Activated T-helper 2 cell treated with anti-CD3 and anti-CD28 coated beads, Interferon-gamma antibody, Interleukin-2, Interleukin-4, amounts not matched to agents 10 μg/mL and 5 μg/mL and 100 μg/mL, durations not matched to agents 14 hours and 24 hours and 36 hours (primary cell): ENCODE measurements at regions of chr10 and their contacts with region 1.

Region 1: DNA sequence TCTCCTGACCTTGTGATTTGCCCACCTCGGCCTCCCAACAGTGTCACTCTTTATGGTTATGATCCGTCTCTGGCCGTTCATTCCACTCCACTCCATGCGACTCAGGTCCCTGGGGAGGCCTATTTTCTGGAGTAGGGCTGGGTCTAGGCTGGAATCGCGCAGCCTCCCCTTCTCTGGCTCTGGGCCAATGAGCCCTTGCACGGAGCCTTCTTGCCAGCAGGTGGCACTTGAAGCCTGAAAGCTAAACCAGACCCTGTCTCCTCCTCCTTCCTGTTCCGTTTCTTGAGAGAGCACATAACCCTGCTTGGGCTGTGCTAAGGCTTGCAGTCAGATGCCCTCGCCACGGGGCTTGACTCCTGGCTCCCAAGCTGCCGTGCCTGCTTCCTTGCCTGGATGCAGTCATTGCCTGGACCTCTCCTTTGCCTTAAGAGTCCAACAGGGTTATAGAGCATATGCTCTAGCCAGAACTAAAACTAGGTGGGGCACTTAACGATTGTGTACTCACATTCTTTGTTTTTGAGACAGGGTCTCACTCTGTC is 9.6 kb upstream of the DNAJB12 start:
- DNase-seq: peak; percentile 79
- H3K4me3 Mint-ChIP-seq: no peak overlapping the region
- H3K27ac Mint-ChIP-seq: peak overlapping the region; percentile 40
- H3K4me1 Mint-ChIP-seq: peaks cover 19% of the 10 kb centered on the region
- H3K27me3 Mint-ChIP-seq: peaks cover 2% of the 10 kb centered on the region

Region 2: DNA sequence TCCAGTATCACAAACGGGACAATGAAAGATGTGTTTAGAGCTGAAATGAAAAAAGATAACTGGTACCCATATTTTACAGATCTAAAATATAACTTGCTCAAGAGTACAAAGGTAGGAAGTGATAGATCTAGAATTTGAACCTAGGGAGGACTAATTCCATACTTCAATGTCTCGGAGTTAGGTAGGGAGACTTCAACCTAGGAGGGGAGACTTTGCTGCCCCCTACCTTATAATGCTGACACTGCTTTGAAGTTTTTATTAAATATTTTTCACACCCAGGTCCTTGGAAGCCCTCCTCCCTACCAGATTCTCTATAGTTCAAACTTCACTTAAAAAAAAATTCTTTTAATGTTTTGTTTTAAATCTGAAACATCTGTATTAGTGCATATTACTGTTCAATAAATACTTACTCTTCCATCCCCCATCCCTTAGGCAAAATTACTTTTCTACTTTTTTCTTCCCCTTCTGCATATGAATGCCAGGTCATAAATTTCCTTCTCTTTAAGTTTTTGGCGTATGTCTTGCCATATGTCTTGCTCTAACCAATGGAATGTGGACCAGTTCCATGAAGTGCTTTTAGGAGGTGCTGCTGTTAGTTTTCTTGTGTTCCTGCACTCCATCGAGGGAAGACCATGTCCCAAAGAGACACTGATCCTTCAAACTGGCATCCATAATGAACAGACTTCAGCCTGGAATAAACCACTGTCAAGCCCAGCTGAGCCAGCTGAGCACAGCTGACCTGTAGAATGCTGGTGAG is 203.8 kb after region 1 on chr10:
- intact Hi-C with region 1: loop called (anchors 5 kb)
- DNase-seq: no peak
- H3K4me3 Mint-ChIP-seq: no peak overlapping the region
- H3K27ac Mint-ChIP-seq: no peak overlapping the region
- H3K4me1 Mint-ChIP-seq: peaks cover 16% of the 10 kb centered on the region
- H3K27me3 Mint-ChIP-seq: no peaks in the 10 kb centered on the region

Region 3: GRCh38 chr10:72692057-72692910 is 328.0 kb after region 1 on chr10 and contains the start of gene MCU:
- intact Hi-C with region 1: loop called (anchors 5 kb)
- DNase-seq: peak; percentile 88
- H3K4me3 Mint-ChIP-seq: peak within 1 kb of the TSS; percentile 84
- H3K27ac Mint-ChIP-seq: peak within 1 kb of the TSS; percentile 1
- H3K4me1 Mint-ChIP-seq: peaks cover 27% of the 10 kb centered on the region
- H3K27me3 Mint-ChIP-seq: peaks cover 5% of the 10 kb centered on the region
- total RNA-seq, gene MCU: 11.6 and 13.2 TPM in 2 replicates

Region 4: GRCh38 chr10:72834183-72834825 is 470.0 kb after region 1 on chr10:
- intact Hi-C with region 1: loop called (anchors 1 kb)
- DNase-seq: peak; percentile 12
- H3K4me3 Mint-ChIP-seq: no peak overlapping the region
- H3K27ac Mint-ChIP-seq: no peak overlapping the region
- H3K4me1 Mint-ChIP-seq: peaks cover 5% of the 10 kb centered on the region
- H3K27me3 Mint-ChIP-seq: no peaks in the 10 kb centered on the region

Region 5: DNA sequence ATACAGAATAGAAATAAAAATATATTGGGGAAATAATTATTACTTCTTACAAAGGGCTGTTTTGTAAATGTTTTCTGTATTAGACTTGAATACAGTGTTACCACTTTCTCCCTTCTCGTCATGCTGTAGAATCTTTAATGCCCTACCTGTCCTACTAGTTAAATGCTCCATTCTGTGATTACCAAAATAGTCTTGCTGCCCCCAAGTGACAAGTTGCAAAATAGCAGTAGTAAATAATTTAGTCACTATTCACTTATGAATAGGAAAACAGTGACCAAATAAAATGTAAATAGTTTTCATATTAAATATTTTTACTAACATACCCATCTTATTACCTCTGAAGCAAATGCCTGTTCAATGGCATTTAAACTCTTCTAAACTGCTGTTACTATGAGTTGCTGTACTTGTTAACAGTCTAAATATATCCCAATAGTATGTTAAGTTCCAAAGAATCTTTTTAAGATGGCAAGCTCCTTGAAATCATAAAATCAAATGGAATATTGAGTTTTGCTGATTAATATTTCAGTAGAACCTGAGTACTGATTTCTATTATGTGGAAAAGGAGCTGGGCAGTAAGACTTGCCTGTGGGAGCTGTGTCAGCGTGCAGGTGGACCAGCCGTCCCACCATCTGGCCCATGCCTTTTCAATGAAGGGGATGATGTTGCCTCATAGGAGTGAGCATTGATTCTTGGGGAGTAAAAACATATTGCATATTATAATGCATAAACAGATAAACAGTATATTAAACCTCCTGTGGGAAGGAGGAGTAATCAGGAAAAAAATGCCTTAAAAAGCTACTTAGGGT is 511.1 kb after region 1 on chr10:
- intact Hi-C with region 1: loop called (anchors 1 kb)
- DNase-seq: no peak
- H3K4me3 Mint-ChIP-seq: no peak overlapping the region
- H3K27ac Mint-ChIP-seq: no peak overlapping the region
- H3K4me1 Mint-ChIP-seq: no peaks in the 10 kb centered on the region
- H3K27me3 Mint-ChIP-seq: no peaks in the 10 kb centered on the region

Region 6: DNA sequence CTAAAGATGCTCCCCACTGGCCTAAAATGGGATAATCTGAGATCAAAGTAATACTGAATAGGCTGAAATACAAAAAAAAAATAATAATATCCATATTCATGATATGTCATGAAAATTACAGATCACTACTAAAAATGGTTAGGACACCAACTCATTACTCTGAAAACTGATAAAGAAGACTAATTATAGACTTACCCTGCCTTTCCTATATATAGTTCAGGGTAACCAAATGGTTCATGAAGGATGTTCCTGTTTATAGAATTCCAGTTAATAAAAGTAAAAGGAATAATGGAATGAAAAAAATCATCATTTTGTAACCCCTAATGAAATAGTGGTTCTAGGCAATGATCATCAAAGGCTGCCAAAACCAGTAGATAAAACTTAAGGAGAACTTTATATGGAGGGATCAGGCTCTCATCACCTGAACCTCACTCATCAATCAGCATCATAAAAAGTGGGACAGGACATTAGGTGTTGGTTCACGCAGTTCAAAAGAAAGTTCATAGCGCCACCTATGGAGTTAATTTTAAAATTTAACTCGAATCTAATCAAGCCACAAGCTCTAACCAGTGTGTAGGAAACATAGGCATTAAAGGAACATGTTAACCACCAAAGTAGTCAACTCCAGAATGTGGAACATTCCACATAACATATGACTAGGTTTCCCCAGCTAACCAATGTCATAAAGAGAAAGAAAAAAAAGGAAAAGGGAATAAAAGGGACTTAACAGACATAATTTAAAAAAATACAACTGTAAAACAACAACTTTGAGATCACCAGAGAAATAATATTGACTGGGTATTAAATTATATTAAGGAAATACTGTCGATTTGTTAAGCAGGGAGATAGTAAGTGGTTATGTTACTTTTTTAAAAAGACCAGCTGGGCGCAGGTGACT is 696.7 kb after region 1 on chr10:
- intact Hi-C with region 1: loop called (anchors 2 kb)
- DNase-seq: no peak
- H3K4me3 Mint-ChIP-seq: no peak overlapping the region
- H3K27ac Mint-ChIP-seq: peak overlapping the region; percentile 81
- H3K4me1 Mint-ChIP-seq: peaks cover 18% of the 10 kb centered on the region
- H3K27me3 Mint-ChIP-seq: no peaks in the 10 kb centered on the region